Activated naive CD4-positive, alpha-beta T cell treated with anti-CD3 and anti-CD28 coated beads for 36 hours (primary cell): ENCODE measurements at regions of chrX and their contacts with region 1.

Region 1: DNA sequence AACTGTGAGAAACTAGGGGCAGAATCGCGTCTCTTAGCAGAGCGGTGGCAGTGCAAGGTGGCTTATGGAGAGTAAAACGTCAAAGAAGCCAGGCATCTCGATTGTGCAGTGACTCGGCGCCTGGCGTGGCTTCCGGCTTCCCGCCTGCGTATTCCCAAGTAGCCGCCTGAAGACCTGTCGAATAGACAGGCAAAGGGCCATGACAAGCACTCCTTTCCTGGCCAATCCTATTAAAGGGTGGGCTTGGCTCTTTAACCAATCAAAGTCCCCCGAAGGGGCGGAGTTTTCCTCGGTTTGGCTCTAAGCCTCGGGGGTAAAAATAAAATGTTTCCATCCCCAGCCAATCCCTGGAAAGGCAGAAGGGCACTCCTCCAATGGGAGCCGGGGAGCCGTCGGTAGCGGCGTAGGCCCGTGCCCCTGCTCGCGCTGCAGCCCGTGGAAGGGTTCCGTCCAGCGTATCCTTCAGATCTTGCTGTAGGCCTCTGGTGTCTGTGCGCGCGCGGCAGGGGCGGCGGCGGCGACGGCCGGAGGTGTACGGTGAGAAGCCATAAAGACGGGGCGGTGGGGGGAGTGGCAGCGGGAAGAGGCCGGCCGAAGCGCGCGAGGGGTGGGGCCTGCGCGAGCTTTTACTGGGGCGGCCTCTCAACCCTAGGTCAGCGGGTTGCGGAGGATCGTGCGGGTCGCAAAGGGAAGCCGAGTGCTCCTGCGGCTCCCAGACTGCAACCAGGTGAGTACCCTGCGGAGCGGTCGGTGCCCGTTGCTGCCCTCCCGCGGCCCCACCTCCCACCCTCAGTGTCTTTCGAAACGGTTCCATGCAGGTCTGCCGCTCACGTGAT is at the start of gene KANTR:
- DNase-seq: peak; percentile 90
- H3K4me3 Mint-ChIP-seq: peak within 1 kb of the TSS; percentile 91
- H3K27ac Mint-ChIP-seq: peak within 1 kb of the TSS; percentile 91
- H3K4me1 Mint-ChIP-seq: peaks cover 13% of the 10 kb centered on the region
- H3K27me3 Mint-ChIP-seq: no peaks in the 10 kb centered on the region
- total RNA-seq, gene KANTR: 7.5 to 9.2 TPM

Region 2: GRCh38 chrX:52574416-52575275 is 519.3 kb before region 1 on chrX:
- CTCF ChIA-PET with region 1: no interaction called
- intact Hi-C with region 1: loop called (anchors 5 kb)
- DNase-seq: peak; percentile 38
- H3K4me3 Mint-ChIP-seq: no peak overlapping the region
- H3K27ac Mint-ChIP-seq: no peak overlapping the region
- H3K4me1 Mint-ChIP-seq: no peaks in the 10 kb centered on the region
- H3K27me3 Mint-ChIP-seq: no peaks in the 10 kb centered on the region

Region 3: DNA sequence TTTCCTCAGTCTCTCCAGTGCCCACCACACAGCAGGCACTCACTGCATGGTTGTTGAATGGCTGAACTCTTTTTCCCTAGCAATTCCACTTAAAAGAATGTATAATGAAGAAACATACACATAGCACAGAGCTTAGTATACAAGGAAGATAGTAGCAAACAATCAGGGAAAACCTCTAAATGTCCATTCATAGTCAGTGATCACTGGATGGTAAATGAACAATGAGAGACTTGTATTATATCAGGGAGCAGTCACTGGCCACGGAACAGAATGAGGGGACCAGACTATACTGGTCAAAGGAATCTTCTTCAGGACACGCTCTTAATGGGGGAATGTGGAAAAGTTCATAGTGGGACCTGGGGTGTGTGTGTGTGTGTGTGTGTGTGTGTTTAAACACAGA is 92.0 kb before region 1 on chrX:
- CTCF ChIA-PET with region 1: no interaction called
- intact Hi-C with region 1: no loop called
- DNase-seq: no peak
- H3K4me3 Mint-ChIP-seq: no peak overlapping the region
- H3K27ac Mint-ChIP-seq: no peak overlapping the region
- H3K4me1 Mint-ChIP-seq: peaks cover 10% of the 10 kb centered on the region
- H3K27me3 Mint-ChIP-seq: no peaks in the 10 kb centered on the region

Region 4: DNA sequence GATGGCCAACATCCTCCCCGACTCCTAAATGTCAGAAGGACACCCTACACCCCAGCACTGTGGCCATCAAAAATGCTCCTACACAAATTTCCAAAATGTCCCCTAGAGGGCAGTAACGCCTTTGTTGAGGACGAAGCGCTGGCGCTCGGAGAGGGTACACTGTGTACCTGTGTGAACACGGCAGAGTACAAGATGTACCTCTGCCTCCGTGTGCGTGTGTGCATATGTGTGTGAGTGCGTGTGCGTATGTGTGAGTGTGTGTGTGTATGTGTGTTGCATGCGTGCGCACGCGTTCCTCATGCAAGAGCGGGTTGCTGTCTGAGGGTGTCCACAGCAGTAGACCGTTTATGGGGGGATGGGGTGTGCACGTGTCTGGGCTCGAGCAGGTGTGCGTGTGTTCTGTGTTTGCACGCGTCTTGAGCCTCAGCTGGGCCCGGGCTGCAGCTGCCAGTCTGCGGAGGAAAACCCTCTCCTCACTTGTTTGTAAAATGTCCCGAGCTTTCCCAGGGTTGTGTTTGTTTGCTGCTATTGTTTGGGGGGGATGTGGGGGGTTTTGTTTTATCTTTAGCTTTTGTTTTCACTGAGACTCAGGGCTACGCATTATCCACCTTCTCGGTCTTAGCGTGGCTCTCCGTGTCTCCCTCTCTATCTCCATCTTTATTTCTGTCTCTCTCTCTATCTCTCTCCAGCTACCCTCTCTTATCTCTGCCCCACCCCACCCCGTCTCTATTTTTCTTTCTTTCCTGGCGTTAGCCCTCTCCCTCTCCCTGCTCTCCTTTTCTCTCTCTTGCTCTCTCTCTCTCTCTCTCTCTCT is 22.2 kb before region 1 on chrX:
- CTCF ChIA-PET with region 1: interaction called, 30 read pairs
- intact Hi-C with region 1: loop called (anchors 1 kb)
- DNase-seq: peak; percentile 72
- H3K4me3 Mint-ChIP-seq: peak overlapping the region; percentile 85
- H3K27ac Mint-ChIP-seq: peak overlapping the region; percentile 90
- H3K4me1 Mint-ChIP-seq: peaks cover 12% of the 10 kb centered on the region
- H3K27me3 Mint-ChIP-seq: no peaks in the 10 kb centered on the region

Region 5: DNA sequence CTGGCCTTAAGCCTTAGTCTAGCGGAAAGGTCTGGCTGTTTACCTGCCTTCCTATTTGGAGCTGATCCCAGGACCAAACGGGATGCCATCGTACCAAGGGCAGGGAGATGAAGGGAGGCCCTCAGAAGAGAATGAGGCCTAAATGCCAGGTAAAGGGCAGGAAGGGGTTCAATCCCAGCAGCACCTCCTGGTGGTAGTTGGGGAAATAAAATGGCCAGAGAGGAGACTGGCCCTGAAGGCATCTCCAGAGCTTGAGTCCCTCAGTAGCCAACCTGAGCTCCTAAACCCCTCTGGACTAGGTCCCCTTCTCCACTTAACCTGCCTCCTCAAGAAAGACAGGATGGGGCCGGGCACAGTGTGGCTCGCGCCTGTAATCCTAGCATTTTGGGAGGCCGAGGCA is 77.4 kb after region 1 on chrX:
- CTCF ChIA-PET with region 1: no interaction called
- intact Hi-C with region 1: no loop called
- DNase-seq: no peak
- H3K4me3 Mint-ChIP-seq: no peak overlapping the region
- H3K27ac Mint-ChIP-seq: no peak overlapping the region
- H3K4me1 Mint-ChIP-seq: no peaks in the 10 kb centered on the region
- H3K27me3 Mint-ChIP-seq: no peaks in the 10 kb centered on the region

Region 6: GRCh38 chrX:53224860-53225797 is 131.2 kb after region 1 on chrX and contains the start of gene KDM5C:
- CTCF ChIA-PET with region 1: no interaction called
- intact Hi-C with region 1: loop called (anchors 2 kb)
- DNase-seq: peak; percentile 89
- H3K4me3 Mint-ChIP-seq: peak within 1 kb of the TSS; percentile 91
- H3K27ac Mint-ChIP-seq: peak within 1 kb of the TSS; percentile 95
- H3K4me1 Mint-ChIP-seq: peaks cover 32% of the 10 kb centered on the region
- H3K27me3 Mint-ChIP-seq: no peaks in the 10 kb centered on the region
- total RNA-seq, gene KDM5C: 67.4 to 68.2 TPM

Region 7: DNA sequence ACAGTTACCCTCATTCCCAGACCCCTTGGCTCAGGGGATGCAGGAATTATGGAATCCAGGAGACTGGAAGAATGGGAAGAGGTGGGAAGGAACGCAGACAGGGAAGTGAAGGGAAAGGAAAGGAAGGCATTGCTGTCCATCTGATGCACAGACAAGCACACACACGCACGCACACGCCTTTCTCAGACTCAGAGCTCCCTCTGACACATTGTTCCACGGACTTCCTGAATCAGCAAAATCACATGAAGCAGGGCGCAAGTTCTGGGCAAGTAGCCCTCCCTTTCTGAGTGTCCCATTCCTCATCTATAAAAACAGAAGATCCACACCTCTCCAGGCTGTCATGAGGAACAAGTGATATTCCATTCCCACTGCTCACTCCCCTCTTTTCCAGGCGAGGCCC is 174.2 kb after region 1 on chrX:
- CTCF ChIA-PET with region 1: no interaction called
- intact Hi-C with region 1: no loop called
- DNase-seq: no peak
- H3K4me3 Mint-ChIP-seq: no peak overlapping the region
- H3K27ac Mint-ChIP-seq: no peak overlapping the region
- H3K4me1 Mint-ChIP-seq: peaks cover 5% of the 10 kb centered on the region
- H3K27me3 Mint-ChIP-seq: no peaks in the 10 kb centered on the region

Region 8: DNA sequence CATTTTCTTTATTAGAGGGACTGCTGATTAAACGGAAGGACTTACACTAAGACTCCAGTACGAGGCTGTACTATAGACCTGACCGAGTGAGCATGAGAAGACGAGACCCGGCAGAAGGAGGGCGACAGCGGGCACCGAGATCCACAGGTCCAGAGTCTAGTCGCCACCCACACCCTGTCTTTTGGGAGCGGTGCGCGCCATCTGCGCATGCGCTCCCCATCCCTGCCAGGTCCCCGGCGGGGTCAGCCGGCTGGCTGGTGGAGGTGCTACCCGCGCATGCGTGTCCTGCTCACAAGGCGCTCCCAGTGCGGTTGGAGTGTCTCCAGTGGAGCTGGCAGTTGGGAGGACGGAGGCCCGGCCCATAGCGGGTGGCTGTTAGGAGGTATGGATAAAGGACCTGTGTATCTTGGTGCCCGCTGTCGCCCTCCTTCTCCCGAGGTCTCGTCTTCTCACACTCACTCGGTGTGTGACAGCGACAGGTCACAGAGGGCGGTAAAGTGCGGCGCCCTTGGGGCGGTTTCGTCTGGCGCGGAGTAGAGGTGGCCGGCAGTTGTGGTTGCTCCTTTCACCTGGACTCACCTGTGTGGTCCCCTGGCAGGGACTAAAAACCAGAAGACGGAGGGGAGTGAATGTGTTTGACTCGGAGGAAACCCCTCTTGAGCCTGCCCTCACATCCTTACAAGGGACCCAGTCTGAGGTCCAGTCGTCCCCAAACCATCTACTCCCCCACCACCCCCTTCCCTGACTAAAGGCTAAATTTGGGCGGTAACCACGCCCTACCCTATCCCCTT is 347.8 kb after region 1 on chrX:
- CTCF ChIA-PET with region 1: no interaction called
- intact Hi-C with region 1: no loop called
- DNase-seq: peak; percentile 72
- H3K4me3 Mint-ChIP-seq: peak overlapping the region; percentile 78
- H3K27ac Mint-ChIP-seq: no peak overlapping the region
- H3K4me1 Mint-ChIP-seq: peaks cover 26% of the 10 kb centered on the region
- H3K27me3 Mint-ChIP-seq: no peaks in the 10 kb centered on the region

Region 9: GRCh38 chrX:54808605-54809483 is 1714.9 kb after region 1 on chrX:
- CTCF ChIA-PET with region 1: no interaction called
- intact Hi-C with region 1: loop called (anchors 5 kb)
- DNase-seq: peak; percentile 92
- H3K4me3 Mint-ChIP-seq: peak overlapping the region; percentile 88
- H3K27ac Mint-ChIP-seq: peak overlapping the region; percentile 88
- H3K4me1 Mint-ChIP-seq: peaks cover 15% of the 10 kb centered on the region
- H3K27me3 Mint-ChIP-seq: no peaks in the 10 kb centered on the region